ENCODE measurements at regions of chr12 and their contacts with region 1.

Region 1: DNA sequence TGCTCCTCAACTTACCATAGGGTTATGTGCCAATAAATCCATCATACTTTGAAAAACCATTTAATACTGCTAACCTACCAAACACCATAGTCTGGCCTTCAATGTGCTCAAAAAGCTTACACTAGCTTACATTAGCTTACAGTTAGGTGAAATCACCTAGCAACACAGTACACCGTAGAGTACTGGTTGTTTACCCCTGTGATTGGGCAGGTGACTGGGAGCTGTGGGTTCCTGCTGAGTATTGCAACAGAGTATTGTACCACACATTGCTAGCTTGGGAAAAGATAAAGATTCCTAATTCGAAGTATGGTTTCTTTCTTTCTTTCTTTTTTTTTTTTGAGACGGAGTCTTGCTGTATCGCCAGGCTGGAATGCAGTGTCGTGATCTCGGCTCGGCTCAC is 5.6 kb downstream of the ATP5MC2 start:
- DNase-seq: no peak
- ATAC-seq: no peak
- H3K4me3 ChIP-seq: no peak overlapping the region
- H3K27ac ChIP-seq: no peak overlapping the region; the same call in 1 of the 2 replicates
- H3K4me1 ChIP-seq: peaks cover 4% of the 10 kb centered on the region
- H3K27me3 ChIP-seq: no peaks in the 10 kb centered on the region
- CTCF ChIP-seq: no peak

Region 2: GRCh38 chr12:53431187-53431586 is 239.1 kb before region 1 on chr12:
- CTCF ChIA-PET with region 1: no interaction called
- POLR2A ChIA-PET with region 1: no interaction called
- in situ Hi-C with region 1: no loop called
- intact Hi-C with region 1: no loop called
- DNase-seq: no peak
- ATAC-seq: 0 out of 2 replicates have a peak, but pooled peaks have one; percentile 23
- H3K4me3 ChIP-seq: no peak overlapping the region
- H3K27ac ChIP-seq: no peak overlapping the region
- H3K4me1 ChIP-seq: 0 out of 2 replicates have a peak, but pooled peaks cover 6% of the 10 kb centered on the region
- H3K27me3 ChIP-seq: no peaks in the 10 kb centered on the region
- CTCF ChIP-seq: no peak

Region 3: DNA sequence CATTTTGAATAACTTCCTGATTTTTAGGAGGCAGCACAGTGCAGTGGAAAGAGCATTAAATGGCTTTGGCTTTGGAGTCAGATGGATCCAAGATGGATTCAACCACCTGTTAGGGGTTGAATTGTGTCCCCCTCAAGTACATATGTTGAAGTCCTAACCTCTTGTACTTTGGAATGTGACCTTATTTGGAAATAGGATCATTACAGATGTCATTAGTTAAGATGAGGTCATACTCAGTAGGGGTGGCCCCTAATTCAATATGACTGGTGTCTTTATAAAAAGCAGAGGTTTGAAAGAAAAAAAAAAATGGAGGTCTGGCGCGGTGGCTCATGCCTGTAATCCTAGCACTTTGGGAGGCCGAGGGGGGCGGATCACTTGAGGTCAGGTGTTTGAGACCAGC is 13.3 kb before region 1 on chr12:
- CTCF ChIA-PET with region 1: interaction called, 10 read pairs
- POLR2A ChIA-PET with region 1: no interaction called
- in situ Hi-C with region 1: no loop called
- intact Hi-C with region 1: no loop called
- DNase-seq: no peak
- ATAC-seq: no peak
- H3K4me3 ChIP-seq: no peak overlapping the region
- H3K27ac ChIP-seq: peak overlapping the region; percentile 99
- H3K4me1 ChIP-seq: peaks cover 36% of the 10 kb centered on the region
- H3K27me3 ChIP-seq: no peaks in the 10 kb centered on the region
- CTCF ChIP-seq: no peak

Measured in Panc1 (cell line).